ENCODE measurements at regions of chr4 and their contacts with region 1.

Region 1: GRCh38 chr4:99300934-99301333 is 10.1 kb upstream of the ADH1A start:
- DNase-seq: peak in 1 of 2 donors; percentile 93
- H3K4me3 ChIP-seq: no peak overlapping the region
- H3K27ac ChIP-seq: peak overlapping the region; percentile 81 to 88
- H3K4me1 ChIP-seq: peaks cover 3 to 16% of the 10 kb centered on the region in 2 donors
- H3K27me3 ChIP-seq: no peaks in the 10 kb centered on the region
- CTCF ChIP-seq: no peak

Region 2: DNA sequence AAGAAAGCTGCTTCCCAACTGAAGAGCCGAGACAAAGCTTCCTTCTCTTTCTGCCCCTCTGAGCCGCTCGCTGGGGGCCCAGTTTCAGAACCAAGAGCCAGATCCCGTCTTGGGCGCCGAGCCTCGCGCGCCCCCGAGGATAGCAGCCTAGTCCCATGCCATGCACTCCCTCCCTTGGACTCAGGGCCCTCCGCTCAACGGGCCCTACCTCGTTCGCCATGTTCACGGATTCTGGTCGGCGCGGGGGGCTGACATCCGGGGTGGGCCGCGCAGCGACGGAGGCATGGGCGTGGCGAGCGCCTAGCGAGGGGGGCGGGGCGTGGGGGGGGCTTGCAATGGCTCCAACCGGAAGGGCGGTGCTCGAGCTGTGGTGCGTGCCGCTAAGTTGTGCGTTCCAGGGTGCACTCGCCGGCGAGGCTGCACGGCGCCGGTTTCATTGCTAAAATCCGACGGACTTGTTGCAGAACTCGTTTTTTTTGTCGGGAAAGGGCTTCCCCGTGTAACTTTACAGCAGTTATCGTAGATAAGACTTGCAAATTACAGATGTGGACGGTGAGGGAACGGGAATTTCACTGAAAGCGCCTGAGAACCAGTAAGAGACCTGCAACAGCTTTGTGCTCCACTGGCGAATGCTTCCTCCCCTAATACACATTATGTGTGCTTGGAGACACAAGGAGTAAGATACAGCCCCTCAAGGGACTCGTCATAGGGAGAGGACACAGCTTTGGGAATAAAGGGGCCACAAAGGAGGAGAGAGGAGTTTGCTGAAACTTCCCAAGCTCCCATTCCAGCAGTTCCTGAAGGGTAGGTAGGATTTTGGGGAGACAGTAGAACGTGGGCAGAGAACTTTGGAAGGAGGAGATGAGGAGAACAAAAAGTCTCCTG is 212.2 kb before region 1 on chr4 and contains the start of gene ADH5:
- intact Hi-C with region 1: loop called (anchors 10 kb)
- DNase-seq: peak; percentile 46 to 92
- H3K4me3 ChIP-seq: peak within 1 kb of the TSS; percentile 87 to 95
- H3K27ac ChIP-seq: peak within 1 kb of the TSS; percentile 97 to 98
- H3K4me1 ChIP-seq: peaks cover 0 to 15% of the 10 kb centered on the region in 2 donors
- H3K27me3 ChIP-seq: no peaks in the 10 kb centered on the region
- CTCF ChIP-seq: no peak
- total RNA-seq, gene ADH5: 93.4 TPM

Region 3: GRCh38 chr4:99205153-99205979 is 95.6 kb before region 1 on chr4:
- intact Hi-C with region 1: loop called (anchors 2 kb)
- DNase-seq: peak in 1 of 2 donors; percentile 77
- H3K4me3 ChIP-seq: no peak overlapping the region
- H3K27ac ChIP-seq: peak overlapping the region; percentile 75 to 85
- H3K4me1 ChIP-seq: peaks cover 9 to 40% of the 10 kb centered on the region in 2 donors
- H3K27me3 ChIP-seq: no peaks in the 10 kb centered on the region
- CTCF ChIP-seq: no peak

Region 4: GRCh38 chr4:99248714-99249113 is 52.2 kb before region 1 on chr4:
- intact Hi-C with region 1: loop called (anchors 5 kb)
- DNase-seq: no peak
- H3K4me3 ChIP-seq: no peak overlapping the region
- H3K27ac ChIP-seq: peak overlapping the region; percentile 79 to 82
- H3K4me1 ChIP-seq: peaks cover 0 to 8% of the 10 kb centered on the region in 2 donors
- H3K27me3 ChIP-seq: no peaks in the 10 kb centered on the region
- CTCF ChIP-seq: no peak

Region 5: DNA sequence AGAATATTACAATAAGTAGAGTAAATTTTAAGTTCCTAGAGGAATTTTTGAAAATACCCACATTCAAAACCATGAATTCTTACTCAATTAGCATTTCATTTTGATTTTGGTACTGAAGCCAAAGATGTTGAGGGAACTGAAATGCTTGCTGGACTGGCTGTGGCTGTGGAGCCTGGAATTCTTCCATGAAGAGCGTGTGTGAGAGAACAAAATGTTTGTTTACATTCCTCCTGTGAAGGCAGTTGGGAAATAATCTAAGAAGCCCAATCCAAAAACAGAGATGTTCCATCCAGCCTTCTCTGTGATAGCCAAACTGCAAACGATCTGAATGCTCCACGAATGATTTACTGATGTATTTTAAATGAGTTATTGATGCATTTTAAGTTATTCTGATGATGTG is 24.0 kb after region 1 on chr4:
- intact Hi-C with region 1: loop called (anchors 2 kb)
- DNase-seq: peak in 1 of 2 donors; percentile 83
- H3K4me3 ChIP-seq: no peak overlapping the region
- H3K27ac ChIP-seq: peak overlapping the region; percentile 81 to 82
- H3K4me1 ChIP-seq: peaks cover 6 to 24% of the 10 kb centered on the region in 2 donors
- H3K27me3 ChIP-seq: no peaks in the 10 kb centered on the region
- CTCF ChIP-seq: no peak

Region 6: DNA sequence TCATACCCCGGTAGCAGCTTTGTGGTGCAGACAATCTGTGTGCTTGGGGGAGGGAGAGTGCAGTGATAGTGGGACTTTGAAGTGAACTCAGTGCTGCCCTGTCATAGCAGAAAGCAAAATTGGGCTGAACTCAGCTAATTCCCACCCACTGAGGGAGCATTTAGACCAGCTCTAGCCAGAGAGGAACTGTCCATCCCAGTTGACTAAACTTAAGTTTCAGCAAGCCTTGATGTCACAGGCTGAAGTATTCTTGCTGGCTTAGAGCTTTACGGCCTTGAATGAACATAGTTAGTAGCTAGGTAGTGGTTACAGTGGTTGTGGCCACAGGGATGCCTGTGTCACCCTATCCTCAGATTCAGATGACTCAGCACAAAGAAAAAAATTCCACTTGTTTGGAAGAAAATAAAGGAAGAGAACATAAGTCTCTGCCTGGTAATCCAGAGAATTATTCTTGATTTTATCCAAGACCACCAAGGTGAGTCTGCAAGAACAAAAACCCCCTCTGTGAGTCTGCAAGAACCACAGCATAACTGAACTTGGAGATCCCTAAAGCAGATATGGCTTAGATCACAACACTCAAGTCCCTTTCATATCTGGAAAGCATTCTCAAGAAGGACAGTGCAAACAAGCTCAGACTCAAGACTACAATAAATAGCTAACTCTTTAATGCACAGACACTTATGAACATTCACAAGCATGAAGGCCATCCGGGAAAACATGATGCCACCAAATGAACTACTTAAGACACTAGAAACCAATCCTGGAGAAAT is 94.8 kb after region 1 on chr4:
- intact Hi-C with region 1: loop called (anchors 2 kb)
- DNase-seq: no peak
- H3K4me3 ChIP-seq: no peak overlapping the region
- H3K27ac ChIP-seq: peak overlapping the region; percentile 92 to 95
- H3K4me1 ChIP-seq: peaks cover 5 to 19% of the 10 kb centered on the region in 2 donors
- H3K27me3 ChIP-seq: no peaks in the 10 kb centered on the region
- CTCF ChIP-seq: no peak

Measured in ascending aorta (tissue), 2 donors.